Activated CD4-positive, alpha-beta T cell treated with anti-CD3 and anti-CD28 coated beads, Interleukin-2, amount 10 ng/mL, durations not matched to agents 24 days and 14 days (primary cell): ENCODE measurements at regions of chr20 and their contacts with region 1.

Region 1: GRCh38 chr20:51480507-51481270 is 61.8 kb downstream of the NFATC2 start:
- DNase-seq: peak; percentile 84
- H3K4me3 Mint-ChIP-seq: peak overlapping the region; percentile 82
- H3K27ac Mint-ChIP-seq: peak overlapping the region; percentile 96
- H3K4me1 Mint-ChIP-seq: peaks cover 81% of the 10 kb centered on the region
- H3K27me3 Mint-ChIP-seq: no peaks in the 10 kb centered on the region

Region 2: GRCh38 chr20:51308271-51308670 is 172.4 kb before region 1 on chr20:
- intact Hi-C with region 1: no loop called
- DNase-seq: no peak
- H3K4me3 Mint-ChIP-seq: no peak overlapping the region
- H3K27ac Mint-ChIP-seq: no peak overlapping the region
- H3K4me1 Mint-ChIP-seq: peaks cover 2% of the 10 kb centered on the region
- H3K27me3 Mint-ChIP-seq: peaks cover 19% of the 10 kb centered on the region

Region 3: GRCh38 chr20:51318058-51318895 is 162.4 kb before region 1 on chr20:
- intact Hi-C with region 1: no loop called
- DNase-seq: peak; percentile 79
- H3K4me3 Mint-ChIP-seq: no peak overlapping the region
- H3K27ac Mint-ChIP-seq: no peak overlapping the region
- H3K4me1 Mint-ChIP-seq: peaks cover 3% of the 10 kb centered on the region
- H3K27me3 Mint-ChIP-seq: no peaks in the 10 kb centered on the region

Region 4: GRCh38 chr20:51385646-51386530 is 94.8 kb before region 1 on chr20:
- intact Hi-C with region 1: loop called (anchors 1 kb)
- DNase-seq: peak; percentile 77
- H3K4me3 Mint-ChIP-seq: no peak overlapping the region
- H3K27ac Mint-ChIP-seq: peak overlapping the region; percentile 81
- H3K4me1 Mint-ChIP-seq: peaks cover 67% of the 10 kb centered on the region
- H3K27me3 Mint-ChIP-seq: no peaks in the 10 kb centered on the region

Region 5: GRCh38 chr20:51469578-51470498 is 10.9 kb before region 1 on chr20:
- intact Hi-C with region 1: loop called (anchors 1 kb)
- DNase-seq: no peak
- H3K4me3 Mint-ChIP-seq: peak overlapping the region; percentile 63
- H3K27ac Mint-ChIP-seq: peak overlapping the region; percentile 82
- H3K4me1 Mint-ChIP-seq: peaks cover 51% of the 10 kb centered on the region
- H3K27me3 Mint-ChIP-seq: no peaks in the 10 kb centered on the region

Region 6: DNA sequence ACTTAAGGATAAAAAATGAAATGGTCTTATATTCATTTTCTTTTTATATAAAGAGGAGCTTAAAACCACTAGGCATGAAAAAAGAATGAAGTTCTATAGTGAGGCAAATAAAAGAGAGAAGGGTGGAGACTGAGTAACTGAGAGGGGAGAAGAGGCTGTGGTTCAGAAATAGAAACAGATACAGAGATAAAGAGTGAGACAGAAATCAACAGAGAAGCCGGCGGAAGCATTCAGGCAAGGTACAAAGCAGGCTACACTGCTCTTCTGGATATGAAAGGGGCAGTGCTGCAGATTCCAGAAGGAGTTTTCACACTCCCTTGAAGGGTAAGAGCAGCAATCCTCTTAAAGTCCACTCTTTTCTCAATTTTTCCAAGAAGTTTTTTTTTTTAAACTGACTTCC is 32.0 kb after region 1 on chr20:
- intact Hi-C with region 1: loop called (anchors 1 kb)
- DNase-seq: peak; percentile 81
- H3K4me3 Mint-ChIP-seq: peak overlapping the region; percentile 31
- H3K27ac Mint-ChIP-seq: peak overlapping the region; percentile 84
- H3K4me1 Mint-ChIP-seq: peaks cover 66% of the 10 kb centered on the region
- H3K27me3 Mint-ChIP-seq: no peaks in the 10 kb centered on the region

Region 7: DNA sequence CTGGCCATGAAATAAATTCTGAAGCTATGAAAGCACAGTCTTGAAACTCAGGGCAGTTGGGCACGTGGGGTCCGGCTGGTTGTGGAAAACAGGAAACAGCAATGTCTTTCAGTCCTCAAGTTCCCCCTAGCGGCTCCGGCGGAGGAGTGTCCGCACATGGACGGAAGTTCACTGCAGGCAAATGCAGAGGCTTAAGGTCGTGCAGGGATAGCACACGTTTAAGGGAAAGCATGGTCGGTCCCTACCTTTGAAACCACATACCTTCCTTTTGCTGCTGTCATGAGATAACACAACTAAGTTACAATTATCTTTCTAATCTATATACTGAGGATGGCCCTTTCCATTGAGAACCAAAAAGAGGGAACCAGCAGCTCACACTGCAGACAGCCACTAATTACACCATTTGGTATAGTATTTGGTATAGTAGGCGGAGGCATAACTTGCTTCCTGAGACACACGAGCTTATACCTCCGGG is 114.4 kb after region 1 on chr20:
- intact Hi-C with region 1: loop called (anchors 2 kb)
- DNase-seq: peak; percentile 93
- H3K4me3 Mint-ChIP-seq: peak overlapping the region; percentile 58
- H3K27ac Mint-ChIP-seq: peak overlapping the region; percentile 63
- H3K4me1 Mint-ChIP-seq: peaks cover 43% of the 10 kb centered on the region
- H3K27me3 Mint-ChIP-seq: peaks cover 2% of the 10 kb centered on the region

Region 8: DNA sequence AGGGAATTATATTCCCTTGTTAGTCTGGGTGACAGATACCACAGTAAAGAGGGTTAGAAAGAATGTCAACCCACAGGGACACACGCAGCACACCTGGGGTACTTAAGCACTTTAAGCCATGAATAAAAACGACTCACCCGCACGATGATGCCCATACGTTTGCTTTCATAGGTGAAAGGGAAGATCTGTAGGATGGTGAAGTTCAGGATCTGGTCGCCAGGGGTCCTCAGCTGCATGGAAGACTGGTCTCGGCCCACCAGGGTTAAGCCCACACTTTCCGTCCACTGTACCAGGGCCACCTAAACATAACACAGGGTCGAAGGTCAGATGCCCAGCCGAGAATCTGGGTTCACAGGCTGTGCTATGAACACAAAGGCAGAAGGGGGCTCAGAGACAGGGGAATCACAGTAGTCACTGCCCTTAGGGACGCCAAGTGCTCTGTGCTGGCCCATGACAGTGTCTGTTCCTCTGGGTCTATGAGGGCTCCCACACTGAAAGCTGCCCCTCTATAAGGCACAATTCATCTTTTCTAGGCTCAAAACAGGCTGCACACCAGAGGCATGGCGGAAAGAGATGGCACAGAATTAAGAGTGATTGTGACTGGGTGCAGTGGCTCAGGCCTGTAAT is 158.6 kb after region 1 on chr20:
- intact Hi-C with region 1: no loop called
- DNase-seq: peak; percentile 82
- H3K4me3 Mint-ChIP-seq: no peak overlapping the region
- H3K27ac Mint-ChIP-seq: no peak overlapping the region
- H3K4me1 Mint-ChIP-seq: peaks cover 3% of the 10 kb centered on the region
- H3K27me3 Mint-ChIP-seq: peaks cover 2% of the 10 kb centered on the region

Region 9: DNA sequence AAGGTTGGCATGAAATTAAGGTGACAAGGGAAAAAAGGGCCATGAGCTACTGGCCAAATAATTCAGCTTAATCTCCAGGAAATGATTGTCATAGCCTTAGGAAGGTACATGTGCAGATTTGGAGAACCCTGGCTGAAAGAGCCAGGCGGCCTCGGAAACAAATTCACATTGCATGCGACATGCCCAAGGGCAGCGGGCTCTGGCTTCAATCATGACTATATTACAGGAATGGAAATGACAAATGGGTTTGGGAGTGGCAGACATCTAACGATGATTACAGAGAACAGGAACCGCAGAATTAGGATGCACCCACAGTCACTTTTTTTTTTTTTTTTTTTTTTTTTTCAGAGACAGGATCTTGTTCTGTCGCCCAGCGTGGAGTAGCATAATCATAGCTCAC is 434.1 kb after region 1 on chr20:
- intact Hi-C with region 1: no loop called
- DNase-seq: no peak
- H3K4me3 Mint-ChIP-seq: no peak overlapping the region
- H3K27ac Mint-ChIP-seq: no peak overlapping the region
- H3K4me1 Mint-ChIP-seq: no peaks in the 10 kb centered on the region
- H3K27me3 Mint-ChIP-seq: peaks cover 2% of the 10 kb centered on the region